Activated CD4-positive, alpha-beta memory T cell treated with anti-CD3 and anti-CD28 coated beads for 36 hours (primary cell): ENCODE measurements at regions of chr3 and their contacts with region 1.

Region 1: GRCh38 chr3:49411968-49412631 is at the starts of genes RHOA and TCTA:
- DNase-seq: peak; percentile 99
- H3K4me3 Mint-ChIP-seq: peak within 1 kb of the TSS; percentile 90
- H3K27ac Mint-ChIP-seq: peak within 1 kb of the TSS; percentile 95
- H3K4me1 Mint-ChIP-seq: peaks cover 63% of the 10 kb centered on the region
- H3K27me3 Mint-ChIP-seq: no peaks in the 10 kb centered on the region
- total RNA-seq, gene RHOA: 497 to 514 TPM
- total RNA-seq, gene TCTA: 9.5 to 10.9 TPM

Region 2: DNA sequence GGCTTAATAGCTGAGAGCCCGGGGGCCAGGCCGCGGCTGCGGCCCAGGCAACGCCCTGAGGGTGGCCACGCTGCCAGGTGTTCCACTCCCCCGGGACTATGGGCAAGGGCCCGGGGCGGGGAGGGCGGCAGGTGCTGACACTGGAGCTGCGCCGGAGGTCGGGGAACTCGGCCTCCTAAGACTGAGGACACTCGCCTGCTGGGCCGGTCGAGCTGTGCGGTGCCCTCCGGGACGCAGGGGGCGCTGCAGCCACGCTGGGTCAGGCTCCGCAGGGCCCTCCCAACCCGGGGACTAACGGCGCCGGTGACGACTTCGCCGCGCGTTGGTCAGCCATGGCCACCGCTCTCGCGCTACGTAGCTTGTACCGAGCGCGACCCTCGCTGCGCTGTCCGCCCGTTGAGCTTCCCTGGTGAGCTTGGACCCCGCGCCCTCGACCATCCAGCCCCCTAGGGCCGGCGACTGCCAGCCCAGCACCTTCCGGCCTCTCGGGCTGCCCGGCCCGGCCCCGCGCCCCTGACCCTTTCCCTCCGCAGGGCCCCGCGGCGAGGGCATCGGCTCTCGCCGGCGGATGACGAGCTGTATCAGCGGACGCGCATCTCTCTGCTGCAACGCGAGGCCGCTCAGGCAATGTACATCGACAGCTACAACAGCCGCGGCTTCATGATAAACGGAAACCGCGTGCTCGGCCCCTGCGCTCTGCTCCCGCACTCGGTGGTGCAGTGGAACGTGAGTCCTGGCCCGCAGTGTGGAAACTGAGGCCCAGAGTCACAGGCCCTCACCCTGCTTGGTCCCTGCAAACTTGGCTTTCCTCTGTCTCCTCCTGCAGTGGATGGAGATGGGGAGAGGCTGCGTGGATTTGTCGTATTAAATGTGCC is 390.1 kb before region 1 on chr3 and contains the start of gene NDUFAF3:
- CTCF ChIA-PET with region 1: no interaction called
- POLR2A ChIA-PET with region 1: interaction called, 3 read pairs
- intact Hi-C with region 1: loop called (anchors 10 kb)
- DNase-seq: peak; percentile 96
- H3K4me3 Mint-ChIP-seq: peak within 1 kb of the TSS; percentile 97
- H3K27ac Mint-ChIP-seq: peak within 1 kb of the TSS; percentile 98
- H3K4me1 Mint-ChIP-seq: peaks cover 56% of the 10 kb centered on the region
- H3K27me3 Mint-ChIP-seq: no peaks in the 10 kb centered on the region
- total RNA-seq, gene NDUFAF3: 101 to 106 TPM

Region 3: DNA sequence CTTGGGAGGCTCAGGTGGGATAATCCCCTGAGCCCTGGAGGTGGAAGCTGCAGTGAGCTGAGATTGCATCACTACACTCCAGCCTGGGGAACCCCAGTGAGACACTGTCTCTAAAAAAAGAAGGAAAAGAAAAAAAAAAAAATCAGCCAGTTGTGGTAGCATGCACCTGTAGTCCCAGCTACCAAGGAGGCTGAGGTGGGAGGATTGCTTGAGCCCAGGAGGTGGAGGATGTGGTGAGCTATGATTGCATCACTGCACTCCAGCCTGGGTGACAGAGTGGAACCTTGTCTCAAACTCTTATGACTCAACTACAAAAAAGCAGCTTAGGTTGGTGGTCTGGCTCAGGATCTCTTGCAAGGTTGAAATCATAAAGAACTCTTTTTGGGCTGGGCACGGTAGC is 34.6 kb before region 1 on chr3:
- CTCF ChIA-PET with region 1: no interaction called
- POLR2A ChIA-PET with region 1: interaction called, 3 read pairs
- intact Hi-C with region 1: loop called (anchors 2 kb)
- DNase-seq: peak; percentile 87
- H3K4me3 Mint-ChIP-seq: no peak overlapping the region
- H3K27ac Mint-ChIP-seq: peak overlapping the region; percentile 79
- H3K4me1 Mint-ChIP-seq: peaks cover 34% of the 10 kb centered on the region
- H3K27me3 Mint-ChIP-seq: no peaks in the 10 kb centered on the region

Region 4: DNA sequence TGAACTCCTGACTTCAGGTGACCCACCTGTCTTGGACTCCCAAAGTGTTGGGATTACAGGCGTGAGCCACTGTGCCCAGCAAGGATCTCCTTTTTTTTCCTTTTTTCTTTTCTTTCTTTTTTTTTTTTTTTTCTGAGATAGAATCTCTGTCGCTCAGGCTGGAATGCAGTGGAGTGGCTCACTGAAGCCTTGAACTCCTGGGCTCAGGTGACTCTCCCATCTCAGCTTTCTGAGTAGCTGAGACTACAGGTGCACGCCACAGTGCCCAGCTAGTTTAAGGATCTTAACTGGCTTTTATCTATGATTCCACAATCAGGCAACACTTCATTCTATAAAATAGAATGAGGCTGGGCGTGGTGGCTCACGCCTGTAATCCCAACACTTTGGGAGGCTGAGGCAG is 33.3 kb after region 1 on chr3:
- CTCF ChIA-PET with region 1: interaction called, 58 read pairs
- POLR2A ChIA-PET with region 1: interaction called, 4 read pairs
- intact Hi-C with region 1: loop called (anchors 1 kb)
- DNase-seq: no peak
- H3K4me3 Mint-ChIP-seq: no peak overlapping the region
- H3K27ac Mint-ChIP-seq: no peak overlapping the region
- H3K4me1 Mint-ChIP-seq: peaks cover 15% of the 10 kb centered on the region
- H3K27me3 Mint-ChIP-seq: no peaks in the 10 kb centered on the region

Region 5: GRCh38 chr3:49469936-49470713 is 58.0 kb after region 1 on chr3 and contains the start of gene DAG1:
- CTCF ChIA-PET with region 1: interaction called, 3 read pairs
- POLR2A ChIA-PET with region 1: interaction called, 13 read pairs
- intact Hi-C with region 1: loop called (anchors 1 kb)
- DNase-seq: peak; percentile 97
- H3K4me3 Mint-ChIP-seq: peak within 1 kb of the TSS; percentile 91
- H3K27ac Mint-ChIP-seq: peak within 1 kb of the TSS; percentile 87
- H3K4me1 Mint-ChIP-seq: peaks cover 21% of the 10 kb centered on the region
- H3K27me3 Mint-ChIP-seq: no peaks in the 10 kb centered on the region
- total RNA-seq, gene DAG1: 9.4 to 9.6 TPM